Aorta (tissue), 5 donors: ENCODE measurements at regions of chrX and their contacts with region 1.

Region 1: DNA sequence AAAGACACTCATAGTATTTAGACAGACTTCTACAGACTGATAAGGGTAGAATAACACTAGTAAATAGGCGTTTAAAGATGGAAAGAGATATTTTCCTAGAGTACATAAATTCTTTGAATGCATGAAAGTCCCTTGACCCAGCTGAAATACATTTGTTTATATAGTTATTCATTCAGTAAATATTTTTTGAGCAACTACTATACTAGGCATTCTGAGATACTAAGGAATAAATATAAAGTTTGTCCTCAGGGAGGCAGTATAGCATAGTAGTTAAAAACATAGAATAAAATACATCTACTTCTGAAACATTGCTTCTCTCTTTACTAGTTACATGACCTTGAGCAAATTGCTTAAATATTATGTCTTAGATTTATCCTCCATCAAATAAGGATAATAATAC is 27.4 kb downstream of the HMGN5 start:
- DNase-seq: no peak
- ATAC-seq: no peak
- H3K4me3 ChIP-seq: no peak overlapping the region
- H3K27ac ChIP-seq: no peak overlapping the region
- H3K4me1 ChIP-seq: no peaks in the 10 kb centered on the region
- H3K27me3 ChIP-seq: no peaks in the 10 kb centered on the region

Region 2: GRCh38 chrX:81003491-81004185 is 170.6 kb before region 1 on chrX:
- intact Hi-C with region 1: no loop called
- DNase-seq: no peak
- ATAC-seq: no peak
- H3K4me3 ChIP-seq: no peak overlapping the region
- H3K27ac ChIP-seq: no peak overlapping the region
- H3K4me1 ChIP-seq: no peaks in the 10 kb centered on the region
- H3K27me3 ChIP-seq: no peaks in the 10 kb centered on the region

Region 3: DNA sequence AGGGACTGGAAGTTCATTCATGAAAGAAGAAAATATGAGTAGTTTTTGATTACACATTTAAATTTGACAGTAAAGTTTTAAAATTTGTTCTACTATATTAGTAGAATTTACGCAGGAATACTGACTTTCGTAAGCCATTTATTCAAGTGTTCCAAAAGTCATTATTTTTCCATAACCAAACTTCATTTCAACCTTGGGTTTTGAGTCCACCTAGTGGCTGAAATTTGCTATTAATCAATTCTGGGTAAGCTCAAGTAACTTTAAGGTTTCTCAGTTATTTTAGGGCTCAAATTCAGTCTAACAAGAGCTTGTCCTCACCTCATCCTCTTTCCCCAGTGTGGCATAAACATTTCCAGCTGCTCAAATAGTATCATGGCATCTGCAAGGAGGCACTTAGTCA is 203.0 kb after region 1 on chrX:
- intact Hi-C with region 1: loop called (anchors 5 to 10 kb)
- DNase-seq: no peak
- ATAC-seq: no peak
- H3K4me3 ChIP-seq: no peak overlapping the region
- H3K27ac ChIP-seq: no peak overlapping the region
- H3K4me1 ChIP-seq: no peaks in the 10 kb centered on the region
- H3K27me3 ChIP-seq: no peaks in the 10 kb centered on the region